Activated T-helper 1 cell treated with anti-CD3 and anti-CD28 coated beads, Interleukin-12 subunit alpha, Interleukin-12 subunit beta, Interleukin-2, Interleukin-4 antibody, amounts not matched to agents 30 ng/mL and 10 ng/mL and 1 ng/mL, durations not matched to agents 14 hours and 24 hours and 36 hours (primary cell): ENCODE measurements at regions of chr15 and their contacts with region 1.

Region 1: GRCh38 chr15:63509955-63510940 is 5.9 kb downstream of the USP3 start:
- DNase-seq: no peak
- H3K4me3 Mint-ChIP-seq: no peak overlapping the region
- H3K27ac Mint-ChIP-seq: peak overlapping the region; percentile 11
- H3K4me1 Mint-ChIP-seq: peaks cover 81% of the 10 kb centered on the region
- H3K27me3 Mint-ChIP-seq: no peaks in the 10 kb centered on the region

Region 2: DNA sequence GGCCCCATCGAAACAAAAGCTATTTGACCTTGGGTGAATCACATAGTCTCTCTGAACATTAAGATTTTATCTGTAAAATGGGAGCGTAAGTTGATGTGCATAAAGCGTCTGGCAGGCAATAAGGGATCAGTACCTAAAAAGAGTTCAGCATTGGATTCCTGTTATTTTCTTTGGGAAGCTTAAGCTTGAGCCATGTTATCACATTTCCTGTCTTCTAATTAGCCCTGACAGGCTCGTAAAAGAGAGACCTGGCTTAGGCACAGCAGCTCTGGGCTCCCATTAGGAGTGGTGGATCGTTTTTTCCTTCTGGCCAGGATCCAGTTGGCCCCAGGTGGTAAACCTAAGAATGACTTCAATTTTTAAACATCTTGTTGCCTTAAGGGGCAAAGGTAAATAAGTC is 102.6 kb before region 1 on chr15:
- intact Hi-C with region 1: no loop called
- DNase-seq: no peak
- H3K4me3 Mint-ChIP-seq: no peak overlapping the region
- H3K27ac Mint-ChIP-seq: no peak overlapping the region
- H3K4me1 Mint-ChIP-seq: peaks cover 6% of the 10 kb centered on the region
- H3K27me3 Mint-ChIP-seq: peaks cover 5% of the 10 kb centered on the region

Region 3: GRCh38 chr15:63526401-63526800 is 16.2 kb after region 1 on chr15:
- intact Hi-C with region 1: loop called (anchors 2 kb)
- DNase-seq: no peak
- H3K4me3 Mint-ChIP-seq: no peak overlapping the region
- H3K27ac Mint-ChIP-seq: peak overlapping the region; percentile 53
- H3K4me1 Mint-ChIP-seq: peaks cover 78% of the 10 kb centered on the region
- H3K27me3 Mint-ChIP-seq: no peaks in the 10 kb centered on the region